ENCODE measurements at regions of chr5 and their contacts with region 1.

Region 1: GRCh38 chr5:124980163-124980941 is 233.9 kb upstream of the ZNF608 start:
- DNase-seq: peak in 5 of 10 donors; percentile 15 to 56 (median 18)
- H3K4me3 ChIP-seq: peak overlapping the region in 8 of 59 donors; percentile 0 to 22 (median 6)
- H3K27ac ChIP-seq: peak overlapping the region in 3 of 59 donors; percentile 6 to 29 (median 26)
- H3K27me3 ChIP-seq: no peaks in the 10 kb centered on the region
- CTCF ChIP-seq: peak in 9 of 56 donors; percentile 10 to 39 (median 20)

Region 2: DNA sequence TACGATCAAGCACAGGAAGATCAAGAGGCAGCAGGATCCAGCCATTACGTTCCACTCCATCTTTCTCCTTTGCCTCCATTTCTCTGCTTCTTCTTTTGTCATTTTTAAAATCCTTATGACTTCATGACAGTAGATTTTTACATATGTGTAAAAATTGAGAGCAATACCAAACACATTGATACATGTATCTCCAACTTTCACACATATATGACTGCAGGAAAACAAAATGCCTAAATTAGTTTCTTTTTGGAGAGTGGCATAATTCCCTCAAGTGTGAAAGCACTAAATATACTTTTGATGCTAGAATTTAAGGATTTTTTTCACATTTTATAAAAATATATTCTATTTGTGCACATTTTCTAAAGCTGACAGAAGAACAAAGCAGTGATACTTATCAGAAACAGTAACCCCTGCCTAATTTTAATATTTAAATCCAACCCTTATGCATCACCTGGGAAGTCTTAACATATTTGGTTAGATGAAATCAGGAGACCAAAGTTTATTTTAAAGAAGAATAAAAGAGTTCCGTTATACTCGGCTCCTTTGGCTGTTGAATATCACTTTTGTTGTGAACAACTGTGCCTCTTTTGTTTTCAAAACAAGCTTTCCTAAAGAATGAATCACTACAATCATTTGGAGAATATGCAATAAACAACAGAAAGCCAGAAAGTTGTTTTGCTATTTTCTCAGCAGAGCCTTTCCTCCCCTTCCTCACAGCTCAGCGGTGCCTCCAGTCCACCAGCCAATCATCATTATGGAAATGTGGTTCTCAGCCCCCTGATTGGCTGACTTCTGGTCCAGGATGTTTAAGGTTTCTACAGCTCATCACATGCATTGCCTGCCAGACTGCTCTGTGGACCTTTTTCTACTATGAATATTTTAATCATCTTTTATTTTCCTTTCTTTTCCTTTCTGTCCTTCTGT is 225.0 kb before region 1 on chr5:
- intact Hi-C with region 1: loop called in 1 of 2 experiments (anchors 10 kb)
- DNase-seq: peak in 7 of 10 donors; percentile 41 to 75 (median 60)
- H3K4me3 ChIP-seq: peak overlapping the region in 55 of 59 donors; percentile 0 to 59 (median 33)
- H3K27ac ChIP-seq: peak overlapping the region; percentile 33 to 98 (median 80)
- H3K27me3 ChIP-seq: no peaks in the 10 kb centered on the region
- CTCF ChIP-seq: peak in 3 of 56 donors; percentile 2 to 16 (median 8)